Activated CD4-positive, alpha-beta memory T cell treated with anti-CD3 and anti-CD28 coated beads for 36 hours (primary cell): ENCODE measurements at regions of chr14 and their contacts with region 1.

Region 1: DNA sequence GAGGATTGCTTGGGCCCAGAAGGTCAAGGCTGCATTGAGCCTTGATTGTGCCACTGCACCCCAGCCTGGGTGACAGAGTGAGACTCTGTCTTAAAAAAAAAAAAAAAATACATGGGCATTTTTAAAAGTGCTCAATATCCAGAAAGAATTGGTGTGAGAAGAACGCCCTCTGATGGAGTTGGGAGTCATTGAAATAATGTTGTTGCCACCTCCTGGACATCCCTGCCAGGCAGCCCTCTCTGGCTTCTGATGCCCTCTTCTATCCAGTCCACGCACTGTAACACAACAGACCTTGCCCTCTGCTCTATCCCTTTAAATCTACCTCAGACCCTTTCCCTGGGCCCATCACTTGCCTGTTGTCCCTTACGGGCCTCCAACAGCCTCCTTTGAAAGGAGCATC is 4.9 kb downstream of the PTGDR start:
- DNase-seq: peak; percentile 18
- H3K4me3 Mint-ChIP-seq: no peak overlapping the region
- H3K27ac Mint-ChIP-seq: no peak overlapping the region
- H3K4me1 Mint-ChIP-seq: peaks cover 25% of the 10 kb centered on the region
- H3K27me3 Mint-ChIP-seq: peaks cover 23% of the 10 kb centered on the region

Region 2: DNA sequence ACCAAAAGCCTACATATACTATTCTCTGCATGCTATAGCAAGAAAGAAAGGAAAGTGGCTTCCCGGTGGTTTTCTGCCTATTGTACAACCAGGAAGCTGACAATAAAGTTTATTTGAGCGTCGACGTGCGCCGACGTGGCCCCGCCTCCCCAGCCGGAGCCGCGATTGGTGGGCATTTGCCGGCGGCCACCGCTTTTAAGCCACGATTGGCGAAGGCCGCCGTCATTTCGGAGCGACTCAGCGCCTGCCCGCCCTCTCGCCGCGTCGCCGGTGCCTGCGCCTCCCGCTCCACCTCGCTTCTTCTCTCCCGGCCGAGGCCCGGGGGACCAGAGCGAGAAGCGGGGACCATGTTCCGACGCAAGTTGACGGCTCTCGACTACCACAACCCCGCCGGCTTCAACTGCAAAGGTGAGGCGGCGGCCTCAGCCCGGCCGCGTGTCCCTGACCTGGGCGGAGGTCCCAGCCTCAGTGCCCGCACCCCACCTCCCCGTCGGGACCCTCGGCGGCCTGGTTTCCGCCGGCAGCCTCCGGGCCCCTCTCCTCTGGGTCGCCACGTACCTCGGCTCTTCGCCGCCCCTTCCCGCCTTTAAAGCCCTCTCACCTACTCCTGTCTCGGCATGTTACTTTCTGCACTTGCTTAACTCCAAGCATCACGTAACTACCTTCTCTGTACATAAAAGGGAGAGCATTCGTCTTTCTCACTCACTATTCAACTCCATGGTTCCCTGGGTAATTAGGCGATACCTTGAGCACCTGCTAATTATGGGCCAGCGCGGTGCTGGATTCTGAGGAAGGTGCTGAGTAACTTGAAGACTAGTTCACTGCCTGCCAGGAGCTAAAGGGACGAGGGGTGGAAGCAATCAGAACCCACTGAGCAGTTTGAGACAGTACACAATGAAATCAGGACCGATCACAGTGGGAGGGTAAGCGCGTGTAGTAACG is 282.8 kb before region 1 on chr14 and contains the start of gene RTRAF:
- CTCF ChIA-PET with region 1: interaction called, 4 read pairs
- POLR2A ChIA-PET with region 1: no interaction called
- intact Hi-C with region 1: loop called (anchors 2 kb)
- DNase-seq: peak; percentile 94
- H3K4me3 Mint-ChIP-seq: peak within 1 kb of the TSS; percentile 89
- H3K27ac Mint-ChIP-seq: peak within 1 kb of the TSS; percentile 79
- H3K4me1 Mint-ChIP-seq: peaks cover 35% of the 10 kb centered on the region
- H3K27me3 Mint-ChIP-seq: no peaks in the 10 kb centered on the region
- total RNA-seq, gene RTRAF: 222 to 238 TPM

Region 3: DNA sequence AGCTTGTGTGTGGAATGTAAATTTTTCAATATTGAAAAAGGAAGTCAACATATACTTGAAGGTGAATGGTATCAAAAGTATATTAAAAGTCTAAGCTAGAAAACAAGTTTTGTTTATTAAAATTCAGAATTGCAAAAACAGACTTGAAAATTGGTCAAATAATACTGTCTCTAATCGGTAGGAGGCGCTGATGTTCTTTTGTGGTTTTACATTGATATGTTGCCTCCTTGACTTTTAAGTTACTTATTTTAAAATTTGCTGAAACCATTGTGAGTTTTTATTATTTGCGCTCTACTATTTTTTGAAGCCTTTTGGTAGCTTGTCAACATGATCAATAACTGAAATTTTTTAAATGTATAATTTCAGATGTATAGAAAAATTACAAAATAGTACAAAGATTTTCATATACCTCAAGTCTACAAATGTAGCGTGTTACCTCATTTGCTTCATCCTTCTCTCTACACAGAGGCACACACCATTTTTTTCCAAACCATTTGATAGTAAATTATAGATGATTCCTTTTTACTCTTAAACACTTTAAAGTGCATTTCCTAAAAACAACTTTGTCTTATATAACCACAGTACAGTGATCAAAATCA is 276.1 kb before region 1 on chr14:
- CTCF ChIA-PET with region 1: interaction called, 11 read pairs
- POLR2A ChIA-PET with region 1: no interaction called
- intact Hi-C with region 1: loop called (anchors 2 kb)
- DNase-seq: no peak
- H3K4me3 Mint-ChIP-seq: no peak overlapping the region
- H3K27ac Mint-ChIP-seq: no peak overlapping the region
- H3K4me1 Mint-ChIP-seq: peaks cover 26% of the 10 kb centered on the region
- H3K27me3 Mint-ChIP-seq: no peaks in the 10 kb centered on the region

Region 4: GRCh38 chr14:52043690-52044089 is 228.7 kb before region 1 on chr14:
- CTCF ChIA-PET with region 1: interaction called, 10 read pairs
- POLR2A ChIA-PET with region 1: no interaction called
- intact Hi-C with region 1: loop called (anchors 5 kb)
- DNase-seq: peak; percentile 57
- H3K4me3 Mint-ChIP-seq: no peak overlapping the region
- H3K27ac Mint-ChIP-seq: no peak overlapping the region
- H3K4me1 Mint-ChIP-seq: peaks cover 14% of the 10 kb centered on the region
- H3K27me3 Mint-ChIP-seq: peaks cover 3% of the 10 kb centered on the region

Region 5: DNA sequence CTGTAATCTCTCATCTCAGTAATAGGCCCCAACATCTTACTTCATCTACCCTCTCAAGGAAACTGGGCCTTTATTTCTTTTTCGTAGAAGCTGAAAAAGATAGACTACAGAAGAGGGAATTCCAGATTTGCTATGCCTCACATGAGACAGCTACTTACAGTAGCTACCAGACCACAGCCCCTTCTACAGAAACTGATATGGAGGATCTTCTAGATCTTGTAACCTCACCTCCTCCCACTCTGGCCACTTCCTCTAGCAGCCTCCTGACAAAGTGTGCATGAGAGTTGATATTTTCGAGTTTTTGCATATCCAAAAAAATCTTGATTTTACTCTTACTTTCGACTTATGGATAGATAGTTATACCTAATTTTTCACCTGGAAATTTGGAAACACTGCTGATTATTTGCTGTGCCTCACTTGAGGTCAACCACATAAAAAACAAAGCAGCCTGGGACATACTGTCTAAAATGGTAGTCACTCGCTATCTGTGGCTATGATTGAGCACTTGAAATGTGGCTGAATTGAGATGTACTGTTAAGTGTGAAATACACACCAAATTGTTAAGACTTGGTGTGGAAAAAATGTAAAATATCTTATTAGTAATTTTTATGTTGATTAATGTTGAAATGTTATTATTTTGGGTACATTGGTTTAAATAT is 117.3 kb before region 1 on chr14:
- CTCF ChIA-PET with region 1: no interaction called
- POLR2A ChIA-PET with region 1: no interaction called
- intact Hi-C with region 1: loop called (anchors 10 kb)
- DNase-seq: peak; percentile 25
- H3K4me3 Mint-ChIP-seq: no peak overlapping the region
- H3K27ac Mint-ChIP-seq: no peak overlapping the region
- H3K4me1 Mint-ChIP-seq: peaks cover 17% of the 10 kb centered on the region
- H3K27me3 Mint-ChIP-seq: no peaks in the 10 kb centered on the region

Region 6: GRCh38 chr14:52338051-52338681 is 65.8 kb after region 1 on chr14:
- CTCF ChIA-PET with region 1: no interaction called
- POLR2A ChIA-PET with region 1: no interaction called
- intact Hi-C with region 1: no loop called
- DNase-seq: peak; percentile 20
- H3K4me3 Mint-ChIP-seq: no peak overlapping the region
- H3K27ac Mint-ChIP-seq: no peak overlapping the region
- H3K4me1 Mint-ChIP-seq: peaks cover 22% of the 10 kb centered on the region
- H3K27me3 Mint-ChIP-seq: peaks cover 1% of the 10 kb centered on the region

Region 7: GRCh38 chr14:52352061-52352491 is 79.7 kb after region 1 on chr14:
- CTCF ChIA-PET with region 1: no interaction called
- POLR2A ChIA-PET with region 1: no interaction called
- intact Hi-C with region 1: no loop called
- DNase-seq: peak; percentile 53
- H3K4me3 Mint-ChIP-seq: peak overlapping the region; percentile 42
- H3K27ac Mint-ChIP-seq: peak overlapping the region; percentile 84
- H3K4me1 Mint-ChIP-seq: peaks cover 66% of the 10 kb centered on the region
- H3K27me3 Mint-ChIP-seq: no peaks in the 10 kb centered on the region